ENCODE measurements at regions of chr6 and their contacts with region 1.

Region 1: DNA sequence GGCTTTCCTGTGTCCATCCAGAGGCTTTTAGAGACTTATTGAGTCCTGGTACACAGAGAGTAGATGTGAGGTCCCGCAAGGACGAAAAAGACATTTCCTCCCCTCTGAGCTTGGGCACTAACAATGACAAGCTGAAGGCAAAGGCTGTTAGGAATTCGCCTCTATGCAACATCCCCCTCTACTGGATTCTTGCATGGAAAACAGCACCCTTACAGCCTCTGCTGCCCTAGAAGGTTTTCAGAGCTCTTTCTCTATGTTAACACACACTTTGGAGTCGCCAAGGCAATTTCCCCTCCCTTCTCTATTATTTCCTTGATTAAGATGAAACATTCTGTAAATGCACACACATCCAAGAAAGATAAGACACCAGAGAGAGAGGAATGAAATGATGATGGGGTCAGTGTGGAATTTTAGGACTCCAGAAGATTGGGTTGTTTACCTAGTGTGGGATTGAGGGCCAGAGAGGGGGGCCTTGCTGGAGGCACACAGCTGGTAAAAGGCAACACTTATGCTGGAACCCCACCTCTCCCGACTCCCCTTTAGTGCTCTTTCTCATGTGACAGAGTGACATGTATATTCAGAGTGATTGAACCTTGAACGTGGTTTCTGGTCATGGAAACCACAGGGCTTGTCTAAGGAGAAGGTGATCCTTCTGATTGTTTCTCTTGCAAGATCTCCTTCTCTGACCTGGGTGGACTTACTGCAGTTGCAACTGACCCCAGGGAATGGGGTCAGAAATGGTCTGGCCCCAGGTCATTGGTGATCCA is 300.7 kb downstream of the CLIC5 start:
- DNase-seq: no peak
- ATAC-seq: peak; percentile 91

Region 2: GRCh38 chr6:44475779-44476434 is 1239.0 kb before region 1 on chr6:
- intact Hi-C with region 1: loop called (anchors 5 kb)
- DNase-seq: peak; percentile 85
- ATAC-seq: peak; percentile 77

Region 3: GRCh38 chr6:44655412-44656342 is 1059.2 kb before region 1 on chr6:
- intact Hi-C with region 1: loop called (anchors 1 kb)
- DNase-seq: peak; percentile 75
- ATAC-seq: peak; percentile 72

Region 4: DNA sequence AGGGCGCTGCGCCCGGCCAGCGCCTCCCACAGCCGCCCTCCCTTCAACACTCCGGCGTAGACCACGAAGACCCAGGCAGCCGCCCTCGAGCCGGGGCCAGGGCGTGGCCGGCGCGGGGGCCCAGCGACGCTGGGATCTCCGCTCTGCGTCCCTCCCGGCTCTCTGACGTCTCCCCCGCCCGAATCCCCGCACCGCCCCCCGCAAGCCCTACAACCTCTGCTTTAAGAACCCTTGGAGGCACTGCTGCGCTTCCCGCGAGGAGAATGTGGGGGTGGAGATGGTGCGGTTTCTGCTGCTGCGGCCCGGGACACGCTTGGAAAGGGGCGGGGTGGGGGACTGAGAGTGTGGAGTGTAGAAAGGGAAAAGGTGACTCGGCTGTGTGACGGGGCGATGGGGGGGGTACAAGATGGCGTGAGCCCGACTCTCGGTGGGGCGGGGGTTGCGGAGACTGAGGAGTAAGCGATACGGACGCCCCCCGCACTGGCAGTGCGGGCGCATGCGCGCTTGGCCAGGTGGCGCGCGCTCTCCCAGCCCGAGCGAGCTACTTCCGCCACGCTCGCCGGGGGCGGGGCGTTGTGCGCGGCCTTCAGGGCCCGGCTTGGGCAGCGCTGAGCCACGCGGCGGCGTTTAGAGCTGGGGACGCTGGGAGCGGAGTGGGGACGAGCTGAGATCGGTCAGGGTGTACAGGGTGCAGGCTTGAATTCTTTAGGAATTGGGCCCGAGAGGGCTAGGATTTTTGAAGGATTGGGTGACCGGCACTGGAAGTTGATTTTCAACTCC is 337.2 kb before region 1 on chr6 and contains the start of gene SUPT3H:
- intact Hi-C with region 1: loop called (anchors 5 kb)
- DNase-seq: peak; percentile 97
- ATAC-seq: peak; percentile 99
- total RNA-seq, gene SUPT3H: 3.2 TPM

Measured in Right ventricle myocardium inferior (tissue), 1 donor.